IMR-90 (cell line): ENCODE measurements at regions of chr7 and their contacts with region 1.

Region 1: DNA sequence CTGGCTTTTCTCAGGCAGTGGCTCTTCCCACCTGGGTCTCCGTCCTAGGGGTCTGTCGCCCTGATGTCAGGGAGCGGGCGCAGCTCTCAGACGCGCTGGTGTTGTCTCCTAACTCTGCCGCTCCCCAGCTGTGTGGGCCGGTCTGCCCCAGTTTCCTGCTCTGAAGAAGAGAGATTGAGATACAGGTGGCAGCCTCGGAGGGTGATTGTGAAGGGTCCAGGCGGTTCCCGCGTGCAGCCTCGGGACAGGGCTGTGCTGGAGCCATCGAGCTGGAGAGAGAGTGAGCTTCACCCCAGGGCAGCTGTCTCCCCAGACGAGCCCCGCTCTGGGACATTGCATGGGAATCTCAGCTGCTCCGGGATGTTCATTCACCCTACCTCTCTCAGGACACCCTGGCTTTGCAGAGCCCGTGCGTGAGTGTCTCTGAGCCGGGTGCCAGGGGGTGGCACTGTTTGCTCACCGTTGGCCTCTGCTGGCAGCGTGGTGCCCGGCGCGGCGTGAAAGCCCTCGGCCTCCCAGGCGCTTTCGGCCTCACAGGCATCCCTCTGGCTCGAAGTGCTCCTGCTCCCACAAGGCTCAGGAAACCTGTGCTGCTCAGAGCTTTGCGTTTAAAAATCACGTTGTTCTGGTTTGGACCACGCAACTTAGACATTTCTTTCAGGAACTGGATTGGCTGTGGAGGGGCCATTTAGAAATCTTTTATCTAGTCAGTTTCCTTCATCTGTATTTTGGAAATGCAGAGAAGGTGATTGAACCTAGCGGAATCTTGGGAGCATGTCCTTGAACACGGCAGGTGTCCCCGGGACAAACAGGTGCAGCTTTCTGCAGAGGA is 33.8 kb upstream of the ZFAND2A start:
- DNase-seq: peak; percentile 39
- ATAC-seq: peak; percentile 65
- H3K4me3 ChIP-seq: no peak overlapping the region
- H3K27ac ChIP-seq: no peak overlapping the region
- H3K4me1 ChIP-seq: peaks cover 10% of the 10 kb centered on the region
- H3K27me3 ChIP-seq: no peaks in the 10 kb centered on the region
- CTCF ChIP-seq: peak; percentile 61
- POLR2A ChIP-seq: no peak
- RAD21 ChIP-seq: peak; percentile 64

Region 2: DNA sequence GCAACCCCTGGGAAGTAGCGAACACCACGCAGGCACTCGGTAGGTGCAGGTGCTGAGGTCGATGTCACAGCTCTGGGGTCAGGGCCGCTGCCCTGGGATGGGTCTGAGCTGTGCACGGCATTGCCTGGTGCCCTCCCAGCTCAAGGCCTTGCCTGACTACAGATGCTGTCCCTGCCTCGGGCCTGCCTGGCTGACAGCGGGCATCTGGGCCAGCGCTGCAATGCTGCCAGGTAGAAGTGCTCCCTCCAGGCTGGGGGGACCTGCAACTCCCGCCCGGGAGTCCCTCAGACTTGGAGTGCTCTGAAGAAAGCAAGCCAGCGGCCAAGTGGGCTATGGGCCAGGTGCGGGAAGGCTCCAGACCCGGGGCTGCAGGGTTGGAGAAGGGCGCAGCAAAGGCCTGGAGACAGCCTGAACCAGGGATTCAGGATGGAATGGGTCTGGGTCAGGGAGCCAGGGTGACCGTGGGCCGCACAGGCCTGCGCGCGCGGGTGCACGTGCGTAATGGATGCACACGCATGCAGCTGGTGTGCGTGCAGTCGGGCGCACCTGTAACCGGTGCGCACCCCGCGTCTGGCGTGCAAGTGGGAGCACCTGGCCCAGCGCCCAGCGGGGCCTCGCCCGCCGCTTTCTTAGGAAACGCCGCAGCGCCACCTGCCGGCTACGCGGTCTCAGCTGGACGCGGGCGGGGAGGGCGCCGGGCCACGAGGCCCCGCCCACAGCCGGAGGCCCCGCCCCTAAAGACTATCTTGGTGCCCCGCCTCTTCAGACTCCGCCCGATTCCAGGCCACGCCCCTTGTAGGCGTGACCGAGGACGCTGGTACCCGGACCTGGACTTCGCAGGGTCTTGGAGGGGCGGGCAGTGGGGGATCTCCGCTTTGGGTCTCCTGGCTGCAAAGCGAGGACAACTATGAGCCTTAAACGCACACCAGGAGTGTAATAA is 218.8 kb after region 1 on chr7:
- CTCF ChIA-PET with region 1: no interaction called
- POLR2A ChIA-PET with region 1: no interaction called
- dilution Hi-C with region 1: no loop called
- in situ Hi-C with region 1: no loop called
- intact Hi-C with region 1: loop called (anchors 5 kb)
- DNase-seq: peak; percentile 71
- ATAC-seq: peak; percentile 99
- H3K4me3 ChIP-seq: no peak overlapping the region
- H3K27ac ChIP-seq: no peak overlapping the region
- H3K4me1 ChIP-seq: no peaks in the 10 kb centered on the region
- H3K27me3 ChIP-seq: peaks cover 35% of the 10 kb centered on the region
- CTCF ChIP-seq: peak; percentile 82
- POLR2A ChIP-seq: no peak
- RAD21 ChIP-seq: peak; percentile 75

Region 3: GRCh38 chr7:1432411-1433082 is 238.7 kb after region 1 on chr7:
- CTCF ChIA-PET with region 1: interaction called, 4 read pairs
- POLR2A ChIA-PET with region 1: no interaction called
- dilution Hi-C with region 1: no loop called
- in situ Hi-C with region 1: no loop called
- intact Hi-C with region 1: loop called (anchors 2 kb)
- DNase-seq: peak; percentile 27
- ATAC-seq: peak; percentile 89
- H3K4me3 ChIP-seq: no peak overlapping the region
- H3K27ac ChIP-seq: no peak overlapping the region
- H3K4me1 ChIP-seq: no peaks in the 10 kb centered on the region
- H3K27me3 ChIP-seq: no peaks in the 10 kb centered on the region
- CTCF ChIP-seq: peak; percentile 87
- POLR2A ChIP-seq: no peak
- RAD21 ChIP-seq: peak; percentile 73

Region 4: GRCh38 chr7:1473864-1474512 is 280.2 kb after region 1 on chr7:
- CTCF ChIA-PET with region 1: no interaction called
- POLR2A ChIA-PET with region 1: no interaction called
- dilution Hi-C with region 1: no loop called
- in situ Hi-C with region 1: no loop called
- intact Hi-C with region 1: loop called (anchors 5 kb)
- DNase-seq: peak; percentile 79
- ATAC-seq: peak; percentile 94
- H3K4me3 ChIP-seq: no peak overlapping the region
- H3K27ac ChIP-seq: no peak overlapping the region
- H3K4me1 ChIP-seq: no peaks in the 10 kb centered on the region
- H3K27me3 ChIP-seq: no peaks in the 10 kb centered on the region
- CTCF ChIP-seq: peak; percentile 90
- POLR2A ChIP-seq: no peak
- RAD21 ChIP-seq: peak; percentile 86